Vagina (tissue), 2 donors: ENCODE measurements at regions of chr15 and their contacts with region 1.

Region 1: DNA sequence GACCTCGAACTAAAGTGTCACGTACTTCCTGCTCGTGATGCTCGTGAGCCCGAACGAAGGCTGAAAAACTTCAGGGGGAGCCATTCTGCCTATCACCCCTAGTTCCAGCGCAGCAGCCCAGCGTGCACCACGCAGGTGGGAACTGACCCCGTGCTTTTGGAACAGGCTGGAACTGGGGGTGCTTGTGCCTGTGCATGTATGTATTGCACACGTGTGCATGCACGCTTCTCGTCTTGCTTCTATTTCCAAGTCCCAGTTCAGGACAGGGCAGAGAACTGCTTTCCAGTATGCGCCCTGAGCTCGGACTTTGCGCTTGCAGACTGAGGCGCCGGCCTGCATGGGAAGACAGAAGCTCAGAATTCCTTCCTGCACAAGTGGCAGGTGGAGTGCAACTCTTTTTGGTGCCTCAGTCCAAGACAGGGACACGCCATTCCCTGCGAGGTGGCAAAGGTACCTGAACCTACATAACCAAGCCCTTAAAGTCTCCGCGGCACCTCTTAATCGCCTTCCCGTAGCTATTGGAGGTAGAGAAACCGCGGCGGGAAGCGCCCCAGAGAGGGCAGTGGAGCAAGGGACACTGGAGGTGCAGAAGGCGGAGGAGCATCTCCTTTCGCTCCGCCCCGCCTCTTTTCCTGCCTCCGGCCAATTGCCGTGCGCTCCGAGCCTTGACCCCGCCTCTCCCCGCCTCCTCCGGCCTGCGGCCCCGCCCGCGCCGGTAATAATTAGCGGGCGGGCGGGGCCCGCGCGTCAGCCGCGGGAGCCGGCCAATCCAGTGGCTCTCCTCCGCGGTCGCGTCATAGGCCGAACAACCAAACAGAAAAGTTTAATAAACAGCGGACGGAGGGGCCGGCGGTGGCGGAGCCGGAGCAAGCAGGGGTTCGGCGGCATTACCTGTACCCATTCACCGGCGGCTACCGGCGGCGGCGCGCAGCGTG is at the start of gene ZFAND6:
- DNase-seq: peak in 1 of 2 donors; percentile 97
- H3K4me3 ChIP-seq: peak within 1 kb of the TSS; percentile 81 to 82
- H3K27ac ChIP-seq: peak within 1 kb of the TSS; percentile 97
- H3K4me1 ChIP-seq: peaks cover 22% of the 10 kb centered on the region
- H3K27me3 ChIP-seq: no peaks in the 10 kb centered on the region
- CTCF ChIP-seq: no peak
- POLR2A ChIP-seq: peak in 1 of 2 donors; percentile 75
- total RNA-seq, gene ZFAND6: 87.4 TPM

Region 2: DNA sequence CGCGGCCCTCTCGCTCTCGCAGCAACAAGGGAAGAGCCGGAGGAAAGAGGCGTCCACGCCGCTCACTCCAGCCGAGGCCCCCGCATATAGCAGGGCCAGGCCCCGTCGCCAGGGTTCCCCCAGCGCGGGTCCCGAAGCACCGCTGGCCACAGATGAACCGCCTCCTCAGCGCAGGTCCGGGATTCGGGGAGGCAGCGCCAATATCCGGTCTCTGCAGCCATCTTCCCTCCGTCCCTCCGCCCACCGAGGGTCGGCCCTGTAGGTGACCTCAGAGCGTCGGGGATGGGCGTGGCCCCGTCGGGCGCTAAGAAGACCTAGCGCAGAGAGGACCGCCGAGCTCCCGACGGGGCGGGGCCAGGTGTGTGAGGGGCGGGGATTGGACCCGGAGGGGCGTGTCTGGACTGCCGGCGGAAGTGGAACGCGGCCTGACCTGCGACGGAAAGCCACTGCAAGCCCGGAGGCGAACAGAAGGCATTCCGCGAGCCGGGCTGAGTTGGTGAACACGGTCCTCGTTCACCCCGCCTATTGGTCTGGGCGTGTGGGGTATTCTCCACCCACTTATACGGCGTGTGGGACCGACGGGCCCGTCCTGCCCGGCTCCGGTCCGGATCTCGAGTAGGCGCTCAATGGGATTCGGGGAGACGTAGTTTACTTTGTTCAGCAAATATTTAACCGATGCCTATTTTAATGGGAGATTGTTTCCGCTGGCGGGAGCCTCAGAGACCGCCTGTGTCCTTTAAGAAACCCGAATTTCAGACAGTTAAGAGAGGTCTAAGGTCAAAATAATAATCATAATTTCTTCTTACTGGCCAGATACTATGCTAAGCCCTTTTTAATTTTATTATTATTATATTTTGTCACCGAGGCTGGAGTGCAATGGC is 135.4 kb before region 1 on chr15:
- intact Hi-C with region 1: loop called (anchors 10 kb)
- DNase-seq: peak in 1 of 2 donors; percentile 95
- H3K4me3 ChIP-seq: peak overlapping the region; percentile 88 to 89
- H3K27ac ChIP-seq: peak overlapping the region; percentile 93
- H3K4me1 ChIP-seq: peaks cover 12% of the 10 kb centered on the region
- H3K27me3 ChIP-seq: no peaks in the 10 kb centered on the region
- CTCF ChIP-seq: no peak
- POLR2A ChIP-seq: peak in 1 of 2 donors; percentile 79

Region 3: GRCh38 chr15:80152180-80152845 is 93.2 kb after region 1 on chr15:
- intact Hi-C with region 1: loop called (anchors 5 kb)
- DNase-seq: peak; percentile 98 to 99
- H3K4me3 ChIP-seq: peak overlapping the region; percentile 72 to 91
- H3K27ac ChIP-seq: peak overlapping the region; percentile 87
- H3K4me1 ChIP-seq: peaks cover 24% of the 10 kb centered on the region
- H3K27me3 ChIP-seq: no peaks in the 10 kb centered on the region
- CTCF ChIP-seq: no peak
- POLR2A ChIP-seq: no peak

Region 4: DNA sequence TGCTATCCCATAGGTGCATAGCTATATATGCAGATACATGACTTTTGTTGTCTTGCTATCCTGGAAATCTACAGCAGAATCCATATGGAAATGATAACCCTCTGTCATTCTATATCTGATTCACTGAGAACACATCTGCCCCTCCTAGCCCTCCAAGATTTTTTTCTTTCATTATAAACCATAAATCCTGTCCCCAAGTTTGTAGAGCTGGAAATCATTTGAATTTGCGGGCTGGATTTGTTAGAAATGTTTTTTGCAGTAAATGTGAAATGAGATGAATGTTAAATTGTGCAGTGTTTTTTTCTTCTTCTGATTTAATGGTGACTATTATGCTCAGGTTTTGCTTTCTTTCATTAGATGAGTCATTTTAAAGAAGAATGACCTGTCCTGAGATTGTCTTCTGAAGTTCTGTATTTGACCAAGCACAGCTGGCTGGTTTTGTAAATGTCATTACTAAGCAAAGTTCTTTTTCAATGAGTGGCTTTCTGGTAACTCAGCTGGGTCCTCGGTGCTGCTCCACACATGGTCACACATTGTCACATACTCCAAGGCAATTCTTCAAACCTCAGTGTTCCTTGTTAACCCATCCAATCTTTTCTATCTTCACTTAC is 610.6 kb after region 1 on chr15:
- intact Hi-C with region 1: no loop called
- DNase-seq: no peak
- H3K4me3 ChIP-seq: no peak overlapping the region
- H3K27ac ChIP-seq: no peak overlapping the region
- H3K4me1 ChIP-seq: no peaks in the 10 kb centered on the region
- H3K27me3 ChIP-seq: no peaks in the 10 kb centered on the region
- CTCF ChIP-seq: no peak
- POLR2A ChIP-seq: no peak

Region 5: GRCh38 chr15:80906159-80906766 is 847.1 kb after region 1 on chr15:
- intact Hi-C with region 1: no loop called
- DNase-seq: no peak
- H3K4me3 ChIP-seq: no peak overlapping the region
- H3K27ac ChIP-seq: no peak overlapping the region
- H3K4me1 ChIP-seq: no peaks in the 10 kb centered on the region
- H3K27me3 ChIP-seq: no peaks in the 10 kb centered on the region
- CTCF ChIP-seq: no peak
- POLR2A ChIP-seq: no peak

Region 6: GRCh38 chr15:81323944-81324881 is 1265.1 kb after region 1 on chr15 and contains the start of gene STARD5:
- intact Hi-C with region 1: loop called (anchors 10 kb)
- DNase-seq: peak in 1 of 2 donors; percentile 98
- H3K4me3 ChIP-seq: peak within 1 kb of the TSS; percentile 88 to 94
- H3K27ac ChIP-seq: peak within 1 kb of the TSS; percentile 81
- H3K4me1 ChIP-seq: peaks cover 24% of the 10 kb centered on the region
- H3K27me3 ChIP-seq: no peaks in the 10 kb centered on the region
- CTCF ChIP-seq: no peak
- POLR2A ChIP-seq: peak in 1 of 2 donors; percentile 89
- total RNA-seq, gene STARD5: 28.0 TPM